ENCODE measurements at regions of chr2 and their contacts with region 1.

Region 1: GRCh38 chr2:234494361-234495250 is 2.3 kb downstream of the ARL4C start:
- DNase-seq: peak; percentile 59
- H3K4me3 ChIP-seq: peak overlapping the region; percentile 86 to 99 (median 97)
- H3K27ac ChIP-seq: peak overlapping the region; percentile 92
- H3K4me1 ChIP-seq: peaks cover 22% of the 10 kb centered on the region
- H3K27me3 ChIP-seq: no peaks in the 10 kb centered on the region
- CTCF ChIP-seq: no peak

Region 2: GRCh38 chr2:233950078-233950825 is 544.4 kb before region 1 on chr2:
- CTCF ChIA-PET with region 1: no interaction called
- dilution Hi-C with region 1: no loop called
- in situ Hi-C with region 1: no loop called
- intact Hi-C with region 1: no loop called
- DNase-seq: no peak
- H3K4me3 ChIP-seq: no peak overlapping the region
- H3K27ac ChIP-seq: no peak overlapping the region
- H3K4me1 ChIP-seq: no peaks in the 10 kb centered on the region
- H3K27me3 ChIP-seq: no peaks in the 10 kb centered on the region
- CTCF ChIP-seq: no peak

Region 3: GRCh38 chr2:234203135-234203984 is 291.2 kb before region 1 on chr2:
- CTCF ChIA-PET with region 1: no interaction called
- dilution Hi-C with region 1: no loop called
- in situ Hi-C with region 1: no loop called
- intact Hi-C with region 1: loop called (anchors 5 kb)
- DNase-seq: peak; percentile 99
- H3K4me3 ChIP-seq: no peak overlapping the region
- H3K27ac ChIP-seq: peak overlapping the region; percentile 67
- H3K4me1 ChIP-seq: peaks cover 16% of the 10 kb centered on the region
- H3K27me3 ChIP-seq: no peaks in the 10 kb centered on the region
- CTCF ChIP-seq: no peak

Region 4: GRCh38 chr2:234288974-234289455 is 205.6 kb before region 1 on chr2:
- CTCF ChIA-PET with region 1: interaction called, 14 read pairs
- dilution Hi-C with region 1: no loop called
- in situ Hi-C with region 1: no loop called
- intact Hi-C with region 1: loop called (anchors 1 kb)
- DNase-seq: peak; percentile 24
- H3K4me3 ChIP-seq: no peak overlapping the region
- H3K27ac ChIP-seq: no peak overlapping the region
- H3K4me1 ChIP-seq: peaks cover 32% of the 10 kb centered on the region
- H3K27me3 ChIP-seq: no peaks in the 10 kb centered on the region
- CTCF ChIP-seq: peak; percentile 61 to 78

Region 5: DNA sequence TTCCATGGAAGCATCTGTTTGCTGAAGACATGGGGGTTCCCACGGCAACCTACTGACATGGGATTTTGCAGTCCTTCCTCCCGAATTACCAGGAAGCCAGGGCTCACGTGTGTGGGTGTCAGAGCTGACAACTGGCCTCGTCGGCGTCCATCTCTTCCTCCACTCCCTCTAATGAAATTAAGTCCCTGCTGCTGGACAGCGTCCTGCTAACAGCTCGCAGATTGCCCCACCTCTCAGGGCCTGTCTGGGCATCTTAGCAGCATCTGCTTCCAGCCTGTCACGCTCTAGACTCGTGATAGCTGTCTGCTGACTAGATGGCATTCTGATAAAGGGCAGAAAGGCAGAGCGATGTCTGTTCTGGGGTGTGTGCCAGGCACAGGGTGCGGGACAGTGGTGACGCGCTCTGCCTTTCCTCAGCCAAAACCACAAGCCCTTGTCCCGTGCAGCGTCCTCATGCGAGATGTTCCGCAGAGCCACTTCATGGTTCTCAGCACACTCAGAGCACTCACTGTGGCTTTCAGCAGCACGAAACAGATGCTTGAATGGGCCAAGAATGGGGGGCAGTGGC is 158.9 kb before region 1 on chr2:
- CTCF ChIA-PET with region 1: no interaction called
- dilution Hi-C with region 1: no loop called
- in situ Hi-C with region 1: no loop called
- intact Hi-C with region 1: loop called (anchors 1 kb)
- DNase-seq: peak; percentile 84
- H3K4me3 ChIP-seq: no peak overlapping the region
- H3K27ac ChIP-seq: no peak overlapping the region
- H3K4me1 ChIP-seq: peaks cover 11% of the 10 kb centered on the region
- H3K27me3 ChIP-seq: no peaks in the 10 kb centered on the region
- CTCF ChIP-seq: no peak

Region 6: GRCh38 chr2:234446404-234447076 is 48.1 kb before region 1 on chr2:
- CTCF ChIA-PET with region 1: no interaction called
- dilution Hi-C with region 1: loop called (anchors 5 kb)
- in situ Hi-C with region 1: no loop called
- intact Hi-C with region 1: loop called (anchors 1 kb)
- DNase-seq: peak; percentile 96
- H3K4me3 ChIP-seq: peak overlapping the region in 1 of 3 experiments; percentile 5
- H3K27ac ChIP-seq: peak overlapping the region; percentile 79
- H3K4me1 ChIP-seq: peaks cover 34% of the 10 kb centered on the region
- H3K27me3 ChIP-seq: no peaks in the 10 kb centered on the region
- CTCF ChIP-seq: no peak